MCF 10A (cell line): ENCODE measurements at regions of chr7 and their contacts with region 1.

Region 1: DNA sequence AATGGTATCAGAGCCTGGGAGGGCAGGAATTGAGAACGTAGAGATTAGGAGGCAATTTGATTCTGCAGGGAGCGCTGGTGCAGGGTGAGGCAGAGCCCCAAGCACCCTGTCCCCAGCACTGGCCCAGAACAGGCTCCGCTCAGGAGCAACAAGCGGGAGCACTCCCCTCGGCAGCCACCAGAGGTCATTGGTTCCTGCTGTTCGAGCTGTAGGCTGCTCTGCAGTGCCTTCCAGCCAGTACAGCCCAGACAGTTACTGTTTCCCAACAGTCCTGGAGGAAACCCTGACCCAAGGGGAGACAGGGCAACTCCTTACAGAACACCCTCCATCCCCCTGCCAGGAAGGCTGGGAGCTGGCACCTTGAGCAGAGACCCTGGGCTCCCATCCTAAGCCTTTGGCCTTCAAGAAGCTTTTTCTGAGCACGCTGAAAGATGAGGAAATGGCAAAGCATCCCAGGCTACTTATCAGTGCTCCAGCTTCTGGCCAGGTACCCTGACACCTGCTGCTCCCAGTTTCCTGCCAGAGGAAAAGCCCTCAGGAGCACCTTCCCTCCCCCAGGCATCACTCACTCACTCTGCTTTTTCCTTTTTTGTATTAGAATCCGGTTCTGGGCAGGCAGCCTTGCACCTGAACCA is 71.2 kb upstream of the EFCAB10 start:
- DNase-seq: peak; percentile 62
- H3K4me3 Mint-ChIP-seq: no peak overlapping the region
- H3K27ac Mint-ChIP-seq: no peak overlapping the region
- H3K4me1 Mint-ChIP-seq: peaks cover 10% of the 10 kb centered on the region
- H3K27me3 Mint-ChIP-seq: no peaks in the 10 kb centered on the region
- CTCF ChIP-seq: peak; percentile 79

Region 2: GRCh38 chr7:105673367-105674142 is 21.1 kb after region 1 on chr7:
- CTCF ChIA-PET with region 1: interaction called, 36 read pairs
- POLR2A ChIA-PET with region 1: no interaction called
- intact Hi-C with region 1: no loop called
- DNase-seq: peak; percentile 86
- H3K4me3 Mint-ChIP-seq: no peak overlapping the region
- H3K27ac Mint-ChIP-seq: peak overlapping the region; percentile 55
- H3K4me1 Mint-ChIP-seq: peaks cover 10% of the 10 kb centered on the region
- H3K27me3 Mint-ChIP-seq: no peaks in the 10 kb centered on the region
- CTCF ChIP-seq: no peak

Region 3: DNA sequence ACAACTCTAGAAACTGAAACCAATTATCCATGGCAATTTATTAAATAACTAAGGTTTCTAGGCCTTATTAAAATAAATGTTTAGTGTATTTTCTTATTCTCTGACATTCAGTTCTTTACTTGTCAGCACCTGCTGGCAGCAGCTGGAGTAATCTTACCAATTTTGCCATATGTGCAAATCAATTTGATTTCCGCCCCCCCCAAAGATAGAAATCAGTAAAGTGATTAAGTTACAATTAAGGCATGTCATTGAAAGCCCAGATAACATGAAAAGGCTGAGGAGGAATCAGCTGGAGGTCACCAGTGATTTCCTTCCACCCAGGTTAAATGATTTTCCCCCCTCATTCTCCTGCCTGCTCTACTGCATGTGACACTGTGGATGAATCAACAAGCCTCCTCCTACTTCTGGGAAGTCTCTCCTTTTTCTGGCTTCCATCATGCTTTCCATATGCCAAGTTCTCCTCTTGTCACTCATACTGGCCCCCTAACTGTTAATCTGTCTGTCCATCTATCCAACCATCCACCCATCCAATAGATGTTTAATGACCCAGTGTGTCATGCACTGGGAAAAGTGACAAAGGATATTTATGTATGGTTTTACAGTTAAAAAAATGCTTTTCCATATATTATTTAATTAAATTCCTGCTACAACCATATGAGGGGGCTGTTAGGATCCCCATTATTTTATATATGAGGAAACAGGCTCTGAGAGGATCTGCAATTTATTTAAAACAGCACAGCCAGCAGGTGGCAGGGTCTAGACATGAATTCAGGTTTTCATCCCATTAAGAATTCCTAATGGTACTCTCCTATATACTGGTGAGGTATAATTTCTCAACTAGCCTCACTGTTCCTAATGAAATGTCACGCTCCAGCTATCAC is 107.4 kb after region 1 on chr7:
- CTCF ChIA-PET with region 1: interaction called, 9 read pairs
- POLR2A ChIA-PET with region 1: no interaction called
- intact Hi-C with region 1: loop called (anchors 1 kb)
- DNase-seq: peak; percentile 61
- H3K4me3 Mint-ChIP-seq: no peak overlapping the region
- H3K27ac Mint-ChIP-seq: no peak overlapping the region
- H3K4me1 Mint-ChIP-seq: no peaks in the 10 kb centered on the region
- H3K27me3 Mint-ChIP-seq: no peaks in the 10 kb centered on the region
- CTCF ChIP-seq: peak; percentile 62

Region 4: DNA sequence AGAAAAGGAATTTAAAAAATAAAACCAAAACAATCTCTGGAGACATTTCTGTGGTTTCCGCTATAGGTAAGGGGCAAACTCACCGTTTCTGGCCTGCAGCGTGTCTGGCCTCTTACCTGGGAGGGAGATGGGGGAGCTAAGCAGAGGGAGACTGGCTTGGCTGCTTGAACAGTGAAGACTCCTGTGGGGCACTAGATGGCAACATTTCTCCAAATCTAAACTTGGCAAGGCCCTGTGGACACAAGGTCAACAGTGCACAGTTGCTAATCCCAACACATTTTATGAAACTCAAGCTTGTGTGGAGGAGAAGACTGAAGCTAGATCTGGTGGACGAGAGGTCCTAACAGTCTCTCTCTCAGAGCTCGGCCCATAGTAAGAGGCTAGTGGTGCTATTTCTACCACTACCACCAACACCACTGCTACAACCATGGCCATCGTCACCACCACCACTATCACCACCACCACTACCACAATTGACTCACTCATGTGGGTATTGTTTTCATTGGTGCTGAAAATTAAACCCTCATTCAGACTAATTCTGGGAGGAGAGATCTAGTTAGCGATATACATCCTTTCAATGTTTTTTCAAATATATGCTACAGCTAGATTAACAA is 282.2 kb after region 1 on chr7:
- CTCF ChIA-PET with region 1: interaction called, 3 read pairs
- POLR2A ChIA-PET with region 1: no interaction called
- intact Hi-C with region 1: loop called (anchors 1 kb)
- DNase-seq: peak; percentile 47
- H3K4me3 Mint-ChIP-seq: no peak overlapping the region
- H3K27ac Mint-ChIP-seq: no peak overlapping the region
- H3K4me1 Mint-ChIP-seq: peaks cover 9% of the 10 kb centered on the region
- H3K27me3 Mint-ChIP-seq: no peaks in the 10 kb centered on the region
- CTCF ChIP-seq: peak; percentile 24

Region 5: DNA sequence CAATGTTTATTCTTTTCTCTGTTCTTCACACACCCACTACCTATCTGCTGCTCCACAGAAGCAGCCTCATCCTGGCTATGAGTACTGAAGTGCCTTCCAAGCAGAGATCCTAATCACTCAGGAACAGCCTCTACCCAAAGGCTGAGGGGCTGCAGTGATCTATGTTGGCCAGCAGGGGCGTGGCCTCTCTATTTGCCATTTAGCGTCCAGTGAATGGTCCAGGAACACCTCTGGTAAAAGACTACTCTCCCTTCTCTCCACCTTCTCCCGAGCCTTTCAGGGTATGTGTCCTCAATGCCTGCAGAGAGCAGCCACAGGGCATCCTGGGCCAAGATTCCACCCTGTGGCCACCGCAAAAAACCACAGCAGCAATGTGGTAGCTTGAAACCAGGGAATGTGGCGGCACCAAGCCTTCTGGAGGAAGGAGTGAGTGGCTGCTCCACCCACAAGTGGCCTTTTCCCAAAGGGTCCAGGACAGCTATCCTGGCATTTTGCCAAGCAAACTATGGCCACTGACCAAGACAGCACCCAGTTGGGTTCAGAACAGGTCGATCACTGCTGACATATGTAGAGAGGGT is 388.8 kb after region 1 on chr7:
- CTCF ChIA-PET with region 1: interaction called, 9 read pairs
- POLR2A ChIA-PET with region 1: no interaction called
- intact Hi-C with region 1: loop called (anchors 1 kb)
- DNase-seq: peak; percentile 66
- H3K4me3 Mint-ChIP-seq: no peak overlapping the region
- H3K27ac Mint-ChIP-seq: no peak overlapping the region
- H3K4me1 Mint-ChIP-seq: peaks cover 13% of the 10 kb centered on the region
- H3K27me3 Mint-ChIP-seq: peaks cover 22% of the 10 kb centered on the region
- CTCF ChIP-seq: peak; percentile 59